ENCODE measurements at regions of chr15 and their contacts with region 1.

Region 1: DNA sequence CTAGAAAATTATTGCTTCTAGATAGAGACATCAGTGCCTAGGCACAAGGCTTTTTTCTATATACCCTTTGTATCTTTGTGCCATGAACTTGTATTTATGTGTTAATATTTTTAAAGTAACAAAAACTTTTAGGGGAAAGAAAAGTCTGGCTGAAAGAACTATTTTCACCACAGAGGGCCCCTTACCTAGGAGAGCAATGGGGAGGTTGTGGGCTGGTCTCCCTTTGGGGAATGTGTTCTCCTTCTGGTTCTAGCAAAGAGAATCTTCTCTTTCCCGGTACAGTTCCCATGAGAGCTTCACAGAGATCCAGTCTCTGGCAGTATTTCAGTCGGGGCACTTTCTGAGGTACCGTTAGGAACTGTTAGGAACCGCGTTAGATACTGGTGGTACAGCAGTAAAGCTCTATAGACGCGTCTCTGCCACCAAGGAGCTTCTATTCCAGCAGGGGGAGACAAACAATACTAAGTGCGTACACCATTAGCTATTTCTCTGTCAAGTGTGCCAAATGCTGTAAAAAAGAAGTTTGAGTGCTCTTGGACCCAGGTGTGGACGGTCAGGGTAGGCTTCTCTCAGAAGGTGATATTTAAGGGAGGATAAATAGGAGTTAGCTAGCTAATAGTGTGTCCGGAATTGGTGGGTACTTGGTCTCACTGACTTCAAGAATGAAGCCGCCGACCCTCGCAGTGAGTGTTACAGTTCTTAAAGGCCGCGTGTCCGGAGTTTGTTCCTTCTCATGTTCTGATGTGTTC is 4.6 kb upstream of the EPB42 start:
- DNase-seq: peak in 1 of 2 donors; percentile 28
- ATAC-seq: peak; percentile 74

Region 2: DNA sequence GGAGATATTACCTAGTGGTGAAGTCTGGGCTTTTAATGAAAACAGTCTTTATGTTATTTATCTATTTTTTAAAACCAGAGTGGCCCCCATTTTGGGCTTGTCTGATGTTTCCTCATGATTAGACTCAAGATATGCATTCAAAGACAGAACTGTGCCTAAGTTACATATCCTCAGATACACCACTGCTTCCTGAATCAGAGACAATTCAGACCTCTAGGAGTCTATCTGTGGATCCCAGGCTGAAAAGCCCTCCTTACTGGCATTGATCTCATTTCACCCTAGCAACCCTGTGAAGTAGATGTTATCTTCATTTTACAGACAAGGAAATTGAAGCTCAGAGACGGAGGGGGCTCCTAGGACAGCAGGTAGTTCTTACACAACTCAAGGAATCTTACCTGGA is 58.2 kb after region 1 on chr15:
- intact Hi-C with region 1: loop called in 1 of 2 experiments (anchors 5 kb)
- DNase-seq: no peak
- ATAC-seq: no peak

Measured in left colon (tissue), 2 donors.